Dendritic cell treated with granulocyte-macrophage colony-stimulating factor and Interleukin-4, amounts not matched to agents 40 ng/mL and 50 ng/mL, for 4 days (primary cell): ENCODE measurements at regions of chr12 and their contacts with region 1.

Region 1: GRCh38 chr12:6278439-6279255 is 31.8 kb upstream of the PLEKHG6 start:
- H3K4me3 Mint-ChIP-seq: peak overlapping the region; percentile 70
- H3K27ac Mint-ChIP-seq: peak overlapping the region; percentile 88
- H3K4me1 Mint-ChIP-seq: peaks cover 25% of the 10 kb centered on the region
- H3K27me3 Mint-ChIP-seq: peaks cover 66% of the 10 kb centered on the region

Region 2: GRCh38 chr12:5912437-5913334 is 366.0 kb before region 1 on chr12:
- intact Hi-C with region 1: no loop called
- H3K4me3 Mint-ChIP-seq: no peak overlapping the region
- H3K27ac Mint-ChIP-seq: no peak overlapping the region
- H3K4me1 Mint-ChIP-seq: no peaks in the 10 kb centered on the region
- H3K27me3 Mint-ChIP-seq: peaks cover 4% of the 10 kb centered on the region

Region 3: DNA sequence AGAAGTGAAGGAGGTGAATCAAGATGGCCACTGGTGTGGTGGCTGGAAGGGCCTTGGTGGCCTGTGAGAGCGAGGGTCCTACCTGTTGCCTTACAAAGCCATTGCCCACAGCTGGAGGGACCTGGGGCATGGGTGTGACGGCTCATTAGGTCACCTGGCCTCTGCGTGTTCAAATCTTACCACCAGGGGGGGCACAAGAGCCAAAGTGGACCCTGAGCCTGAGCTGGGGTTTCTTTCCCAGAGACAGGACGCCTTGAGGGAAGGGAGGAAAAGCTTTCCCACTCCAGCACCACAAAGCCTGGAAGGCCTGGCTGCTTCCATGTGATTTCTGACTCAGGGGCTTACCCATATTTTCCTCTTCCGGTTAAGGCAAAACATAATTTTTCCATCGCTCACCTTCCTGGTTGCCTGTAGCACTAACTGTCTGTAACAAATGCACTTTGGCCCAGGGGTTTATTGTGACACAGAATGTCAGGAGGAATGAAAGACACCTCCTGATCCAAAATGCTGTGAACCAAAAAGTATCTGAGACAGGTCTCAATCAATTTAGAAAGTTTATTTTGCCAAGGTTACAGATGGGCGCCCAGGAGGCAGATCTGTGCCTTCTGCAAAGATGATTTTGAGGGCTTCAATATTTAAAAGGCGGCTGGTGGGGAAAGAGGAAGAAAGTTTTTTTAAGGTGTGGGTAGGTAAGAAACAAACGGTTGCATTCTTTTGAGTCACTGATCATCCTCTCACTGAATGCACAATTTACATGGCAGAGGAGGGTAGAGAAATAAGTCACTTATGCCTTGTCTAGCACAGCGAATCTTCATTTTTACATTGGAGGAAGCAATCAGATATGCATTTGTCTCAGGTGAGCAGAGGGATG is 82.7 kb before region 1 on chr12:
- intact Hi-C with region 1: loop called (anchors 1 kb)
- H3K4me3 Mint-ChIP-seq: no peak overlapping the region
- H3K27ac Mint-ChIP-seq: peak overlapping the region; percentile 72
- H3K4me1 Mint-ChIP-seq: peaks cover 65% of the 10 kb centered on the region
- H3K27me3 Mint-ChIP-seq: peaks cover 34% of the 10 kb centered on the region